ENCODE measurements at regions of chr9 and their contacts with region 1.

Region 1: DNA sequence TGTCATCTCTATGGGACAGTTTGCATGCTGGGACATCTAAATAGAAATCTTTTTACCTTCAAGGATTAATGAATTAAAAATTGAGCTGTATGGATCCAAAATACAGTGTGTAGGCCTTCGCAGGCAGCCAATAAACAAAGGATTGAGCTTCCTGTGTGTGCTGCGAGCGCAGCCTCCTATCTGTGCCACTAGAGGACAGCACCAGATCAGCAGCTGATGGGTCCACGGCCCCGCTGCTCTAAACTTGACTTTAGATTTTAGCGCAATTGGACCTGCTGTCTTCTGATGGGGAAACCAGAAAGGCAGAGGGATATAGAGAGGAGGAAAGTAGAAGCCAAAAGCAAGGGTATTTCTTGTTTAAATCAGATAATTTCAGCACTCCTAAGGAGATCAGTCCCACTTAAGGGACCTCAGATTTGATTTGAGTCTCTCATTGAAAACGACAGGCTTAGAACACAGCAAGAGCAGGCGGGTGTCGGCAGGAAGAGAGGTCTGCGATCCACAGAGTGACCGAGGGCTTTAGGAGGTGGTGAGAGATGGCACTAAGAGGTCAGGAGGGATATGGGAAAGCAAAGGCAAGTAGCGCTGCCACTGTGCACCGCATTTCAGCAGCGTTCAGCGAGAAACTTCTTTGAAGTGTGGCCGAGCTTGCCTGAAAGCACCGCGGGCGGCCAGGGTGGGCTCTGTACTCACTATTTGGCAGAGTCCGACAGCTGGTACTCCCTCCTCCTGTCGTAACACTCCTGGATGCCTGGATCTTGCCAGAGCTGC is 214.3 kb downstream of the GNA14 start:
- DNase-seq: peak; percentile 37 to 85 (median 80)
- H3K4me3 ChIP-seq: peak overlapping the region in 30 of 59 donors; percentile 4 to 44 (median 24)
- H3K27ac ChIP-seq: peak overlapping the region in 9 of 59 donors; percentile 5 to 63 (median 26)
- H3K27me3 ChIP-seq: no peaks in the 10 kb centered on the region
- CTCF ChIP-seq: peak in 55 of 56 donors; percentile 72 to 99 (median 96)

Region 2: DNA sequence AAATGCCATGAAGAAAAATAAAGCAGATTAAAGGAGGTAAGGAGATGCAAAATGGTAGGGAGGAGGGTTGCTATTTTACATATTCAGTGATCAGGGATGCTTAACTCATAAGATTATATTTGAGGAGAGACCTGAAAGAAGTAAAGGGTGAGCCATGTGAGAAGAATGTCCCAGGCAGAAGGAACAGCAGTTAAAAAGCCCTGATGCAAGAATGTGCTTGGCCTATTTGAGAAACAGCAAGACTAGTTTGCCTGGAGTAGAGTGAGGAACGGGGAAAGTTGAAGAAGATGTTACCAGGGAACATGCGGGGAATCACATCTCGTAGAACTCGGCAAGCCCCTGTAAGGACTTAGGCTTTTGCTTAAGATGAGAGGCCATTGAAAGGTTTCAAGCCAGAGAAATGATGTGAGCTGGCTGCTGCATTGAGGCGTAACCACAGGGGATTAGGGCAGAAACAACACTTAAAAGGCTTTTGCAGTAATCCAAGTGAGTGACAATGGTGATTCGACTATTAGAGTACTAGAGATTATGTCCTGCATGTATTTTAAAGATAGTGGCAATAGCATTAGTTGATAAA is 57.8 kb before region 1 on chr9:
- intact Hi-C with region 1: no loop called
- DNase-seq: no peak
- H3K4me3 ChIP-seq: no peak overlapping the region
- H3K27ac ChIP-seq: no peak overlapping the region
- H3K27me3 ChIP-seq: no peaks in the 10 kb centered on the region
- CTCF ChIP-seq: no peak

Region 3: GRCh38 chr9:77648234-77649120 is 214.6 kb after region 1 on chr9 and contains the start of gene GNA14:
- intact Hi-C with region 1: loop called in 1 of 2 experiments (anchors 5 kb)
- DNase-seq: peak in 5 of 10 donors; percentile 10 to 52 (median 43)
- H3K4me3 ChIP-seq: peak within 1 kb of the TSS; percentile 46 to 78 (median 64)
- H3K27ac ChIP-seq: peak within 1 kb of the TSS in 24 of 59 donors; percentile 4 to 61 (median 36)
- H3K27me3 ChIP-seq: peaks cover 0 to 26% (median 3%) of the 10 kb centered on the region in 45 donors
- CTCF ChIP-seq: peak in 11 of 56 donors; percentile 4 to 22 (median 13)
- total RNA-seq, gene GNA14: 5.6 to 42.0 (median 13.2) TPM

Region 4: DNA sequence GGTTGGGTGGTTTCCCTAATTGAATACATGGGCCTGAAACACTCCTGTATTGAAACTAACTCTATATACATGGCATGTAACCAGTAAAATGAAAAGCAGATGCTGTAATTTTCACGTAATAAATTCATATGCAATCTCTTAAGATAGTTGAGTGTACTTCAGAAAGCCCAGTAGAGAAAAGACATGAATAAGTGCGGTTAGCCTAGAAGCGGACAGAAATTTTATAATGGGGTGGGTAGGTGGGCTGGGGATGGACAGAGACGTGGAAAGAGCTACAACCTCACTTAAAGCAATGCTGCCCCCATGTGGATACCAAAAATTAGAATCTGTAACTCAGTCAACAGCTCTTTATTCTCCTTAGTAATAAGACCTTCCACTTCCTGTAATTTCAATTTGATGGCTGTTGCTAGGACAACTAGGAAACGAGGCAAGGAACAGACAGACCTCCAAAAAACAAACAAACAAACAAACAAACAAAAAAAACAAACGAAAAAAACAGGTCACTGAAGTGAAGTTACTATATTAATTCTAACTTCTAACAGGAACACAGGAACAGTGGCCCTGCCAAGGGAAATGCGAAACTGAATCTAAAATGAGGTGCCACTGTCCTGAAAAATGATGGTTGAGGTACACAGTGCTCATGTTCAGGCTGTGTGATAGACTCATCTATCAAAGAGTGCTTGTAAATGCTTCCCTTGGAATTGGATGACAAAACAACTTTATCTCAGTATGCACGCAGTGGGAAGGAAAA is 317.7 kb after region 1 on chr9:
- intact Hi-C with region 1: loop called in 1 of 2 experiments (anchors 2 kb)
- DNase-seq: peak in 1 of 10 donors; percentile 9
- H3K4me3 ChIP-seq: peak overlapping the region in 20 of 59 donors; percentile 3 to 38 (median 21)
- H3K27ac ChIP-seq: peak overlapping the region in 54 of 59 donors; percentile 1 to 84 (median 62)
- H3K27me3 ChIP-seq: no peaks in the 10 kb centered on the region
- CTCF ChIP-seq: peak; percentile 48 to 85 (median 70)

Region 5: GRCh38 chr9:77793904-77794303 is 360.0 kb after region 1 on chr9:
- intact Hi-C with region 1: no loop called
- DNase-seq: peak in 1 of 10 donors; percentile 26
- H3K4me3 ChIP-seq: peak overlapping the region in 27 of 59 donors; percentile 4 to 49 (median 14)
- H3K27ac ChIP-seq: peak overlapping the region; percentile 48 to 96 (median 88)
- H3K27me3 ChIP-seq: no peaks in the 10 kb centered on the region
- CTCF ChIP-seq: peak in 39 of 56 donors; percentile 11 to 59 (median 36)

Region 6: GRCh38 chr9:78213712-78214111 is 779.9 kb after region 1 on chr9:
- intact Hi-C with region 1: loop called in 1 of 2 experiments (anchors 5 kb)
- DNase-seq: no peak
- H3K4me3 ChIP-seq: peak overlapping the region in 8 of 59 donors; percentile 12 to 41 (median 17)
- H3K27ac ChIP-seq: peak overlapping the region in 56 of 59 donors; percentile 6 to 86 (median 70)
- H3K27me3 ChIP-seq: no peaks in the 10 kb centered on the region
- CTCF ChIP-seq: peak in 53 of 56 donors; percentile 29 to 78 (median 58)